ENCODE measurements at regions of chr2 and their contacts with region 1.

Region 1: GRCh38 chr2:54680397-54681041 is 42.9 kb upstream of the EML6 start:
- DNase-seq: peak; percentile 80
- H3K4me3 Mint-ChIP-seq: peak overlapping the region; percentile 77
- H3K27ac Mint-ChIP-seq: peak overlapping the region; percentile 63
- H3K4me1 Mint-ChIP-seq: peaks cover 49% of the 10 kb centered on the region
- H3K27me3 Mint-ChIP-seq: peaks cover 47% of the 10 kb centered on the region

Region 2: DNA sequence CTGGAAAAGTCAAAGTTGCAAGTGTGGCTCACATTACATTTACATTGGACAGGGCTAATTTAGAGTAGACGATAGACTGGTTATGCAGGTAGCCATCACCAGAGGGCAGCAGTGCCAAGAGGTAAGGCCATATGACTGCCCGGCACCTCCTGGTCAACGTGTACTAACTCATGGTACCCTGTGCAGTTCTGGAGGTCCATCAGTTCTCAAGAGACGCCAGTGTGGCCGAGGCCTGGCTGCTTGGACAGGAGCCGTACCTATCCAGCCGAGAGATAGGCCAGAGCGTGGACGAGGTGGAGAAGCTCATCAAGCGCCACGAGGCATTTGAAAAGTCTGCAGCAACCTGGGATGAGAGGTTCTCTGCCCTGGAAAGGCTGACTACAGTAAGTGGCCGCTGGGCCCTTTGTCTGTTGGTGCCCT is 22.8 kb before region 1 on chr2:
- intact Hi-C with region 1: loop called (anchors 1 kb)
- DNase-seq: peak; percentile 78
- H3K4me3 Mint-ChIP-seq: no peak overlapping the region
- H3K27ac Mint-ChIP-seq: peak overlapping the region; percentile 76
- H3K4me1 Mint-ChIP-seq: peaks cover 19% of the 10 kb centered on the region
- H3K27me3 Mint-ChIP-seq: no peaks in the 10 kb centered on the region

Region 3: DNA sequence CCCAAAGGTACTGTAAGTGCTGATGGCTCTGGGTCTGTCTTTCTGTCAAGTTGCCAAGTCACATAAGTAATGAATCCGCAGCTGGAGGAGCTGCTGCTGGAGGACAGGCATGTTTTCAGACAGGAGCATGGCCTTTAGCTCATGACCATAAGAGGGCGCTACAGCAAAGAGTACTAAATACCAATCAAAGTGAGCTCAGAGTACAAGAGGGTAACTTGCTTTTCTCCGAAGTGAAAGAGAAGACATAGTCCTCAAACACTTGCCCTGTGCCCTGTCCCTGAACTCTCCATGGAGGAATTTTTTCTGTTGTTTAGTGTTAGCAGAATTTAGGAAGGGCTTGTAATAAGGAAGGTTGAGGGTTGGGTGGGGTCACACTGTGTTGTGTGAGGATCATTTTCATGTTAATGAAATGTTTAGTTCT is 15.1 kb before region 1 on chr2:
- intact Hi-C with region 1: loop called (anchors 2 kb)
- DNase-seq: peak; percentile 86
- H3K4me3 Mint-ChIP-seq: no peak overlapping the region
- H3K27ac Mint-ChIP-seq: no peak overlapping the region
- H3K4me1 Mint-ChIP-seq: peaks cover 15% of the 10 kb centered on the region
- H3K27me3 Mint-ChIP-seq: no peaks in the 10 kb centered on the region